ENCODE measurements at regions of chr1 and their contacts with region 1.

Region 1: DNA sequence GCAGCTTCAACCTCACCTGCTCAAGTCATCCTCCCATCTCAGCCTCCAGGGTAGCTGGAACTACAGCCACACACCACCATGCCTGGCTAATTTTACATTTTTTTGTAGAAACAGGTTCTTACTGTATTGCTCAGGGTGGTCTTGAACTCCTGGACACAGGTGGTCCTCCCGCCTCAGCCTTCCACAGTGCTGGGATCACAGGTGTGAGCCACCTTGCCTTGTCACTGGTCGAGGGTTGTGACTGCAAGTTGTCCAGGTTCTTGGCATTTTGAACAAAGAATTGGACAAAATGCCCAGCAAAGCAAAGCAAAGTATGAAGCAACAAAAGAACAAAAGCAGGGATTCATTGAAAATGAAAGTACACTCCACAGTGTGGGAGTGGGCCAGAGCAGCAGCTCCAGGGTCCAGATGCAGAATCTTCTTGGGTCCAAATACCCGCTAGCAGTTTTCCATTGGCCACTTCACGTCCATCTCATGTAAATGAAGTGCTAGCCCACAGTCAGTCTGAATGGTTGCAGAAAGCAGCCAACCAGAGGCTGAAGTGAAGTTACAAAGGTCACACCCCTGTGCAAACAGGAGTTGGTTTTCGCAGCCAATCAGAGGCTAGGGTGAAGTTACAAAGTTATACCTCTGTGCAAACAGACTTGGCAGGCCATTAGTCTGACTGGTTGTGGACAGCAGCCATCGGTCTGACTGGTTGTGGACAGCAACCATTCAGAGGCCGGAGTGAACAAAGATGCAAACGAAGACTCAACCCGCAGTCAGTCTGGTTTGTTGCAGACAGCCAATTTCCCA is 109.5 kb upstream of the KIF26B start:
- DNase-seq: peak in 1 of 2 donors; percentile 74
- ATAC-seq: peak; percentile 34 to 84 (median 62)
- H3K4me3 ChIP-seq: peak overlapping the region in 2 of 10 donors; percentile 1 to 8
- H3K27ac ChIP-seq: peak overlapping the region in 6 of 10 donors; percentile 2 to 56 (median 34)
- H3K4me1 ChIP-seq: peaks cover 0 to 43% (median 13%) of the 10 kb centered on the region in 9 donors
- H3K27me3 ChIP-seq: no peaks in the 10 kb centered on the region
- CTCF ChIP-seq: no peak

Region 2: GRCh38 chr1:244187310-244187709 is 858.0 kb before region 1 on chr1:
- intact Hi-C with region 1: no loop called
- DNase-seq: no peak
- ATAC-seq: no peak
- H3K4me3 ChIP-seq: no peak overlapping the region
- H3K27ac ChIP-seq: no peak overlapping the region
- H3K4me1 ChIP-seq: no peaks in the 10 kb centered on the region
- H3K27me3 ChIP-seq: peaks cover 0 to 5% (median 0%) of the 10 kb centered on the region in 7 donors
- CTCF ChIP-seq: no peak

Region 3: DNA sequence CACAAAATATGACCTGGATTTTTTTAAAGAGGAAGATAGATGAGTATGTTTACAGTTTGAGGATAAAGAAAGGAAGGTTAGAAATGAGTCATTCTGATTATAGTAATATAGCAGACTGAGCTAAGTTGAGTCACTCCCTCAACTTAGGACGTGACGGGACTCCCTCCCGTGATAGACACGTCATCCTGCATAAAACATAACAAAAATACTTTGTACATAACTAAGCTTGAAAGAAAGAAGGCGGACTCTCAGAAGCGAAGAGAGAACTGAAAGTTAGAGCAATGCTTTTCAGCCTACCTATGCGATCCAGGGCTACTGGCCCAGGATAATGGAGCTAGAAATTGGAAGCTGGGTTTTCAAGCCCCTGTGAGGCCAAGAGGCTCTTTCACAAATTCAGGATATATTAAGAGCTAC is 445.3 kb before region 1 on chr1:
- intact Hi-C with region 1: loop called in 9 of 10 experiments (anchors 2 to 5 kb)
- DNase-seq: no peak
- ATAC-seq: peak in 4 of 8 donors; percentile 24 to 77 (median 37)
- H3K4me3 ChIP-seq: no peak overlapping the region
- H3K27ac ChIP-seq: peak overlapping the region in 1 of 10 donors; percentile 62
- H3K4me1 ChIP-seq: peaks cover 0 to 11% (median 0%) of the 10 kb centered on the region in 9 donors
- H3K27me3 ChIP-seq: peaks cover 0 to 6% (median 0%) of the 10 kb centered on the region in 7 donors
- CTCF ChIP-seq: no peak

Region 4: DNA sequence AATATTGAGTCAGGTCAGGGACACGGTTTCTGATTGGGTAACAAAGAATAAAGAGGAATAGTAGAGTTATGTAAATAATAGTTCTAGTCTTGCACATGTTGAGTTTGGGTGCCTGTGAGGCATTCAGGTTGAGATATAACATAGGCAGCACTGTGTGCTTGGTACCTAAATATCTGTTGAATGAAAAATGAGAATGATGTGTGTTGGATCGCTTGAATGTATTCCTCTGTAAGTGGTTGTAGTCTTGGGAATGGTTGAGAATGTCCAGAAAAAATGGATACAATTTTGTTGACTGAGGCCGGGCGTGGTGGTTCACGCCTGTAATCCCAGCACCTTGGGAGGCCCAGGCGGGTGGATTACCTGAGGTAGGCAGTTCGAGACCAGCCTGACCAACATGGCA is 64.7 kb before region 1 on chr1:
- intact Hi-C with region 1: no loop called
- DNase-seq: no peak
- ATAC-seq: no peak
- H3K4me3 ChIP-seq: no peak overlapping the region
- H3K27ac ChIP-seq: no peak overlapping the region
- H3K4me1 ChIP-seq: no peaks in the 10 kb centered on the region
- H3K27me3 ChIP-seq: no peaks in the 10 kb centered on the region
- CTCF ChIP-seq: no peak

Region 5: GRCh38 chr1:245121513-245121912 is 76.2 kb after region 1 on chr1:
- intact Hi-C with region 1: no loop called
- DNase-seq: no peak
- ATAC-seq: no peak
- H3K4me3 ChIP-seq: no peak overlapping the region
- H3K27ac ChIP-seq: no peak overlapping the region
- H3K4me1 ChIP-seq: no peaks in the 10 kb centered on the region
- H3K27me3 ChIP-seq: no peaks in the 10 kb centered on the region
- CTCF ChIP-seq: no peak

Measured in heart right ventricle (tissue), 16 donors.